Activated B cell treated with CpG ODN at 0.5 μM for 24 hours (primary cell): ENCODE measurements at regions of chr6 and their contacts with region 1.

Region 1: DNA sequence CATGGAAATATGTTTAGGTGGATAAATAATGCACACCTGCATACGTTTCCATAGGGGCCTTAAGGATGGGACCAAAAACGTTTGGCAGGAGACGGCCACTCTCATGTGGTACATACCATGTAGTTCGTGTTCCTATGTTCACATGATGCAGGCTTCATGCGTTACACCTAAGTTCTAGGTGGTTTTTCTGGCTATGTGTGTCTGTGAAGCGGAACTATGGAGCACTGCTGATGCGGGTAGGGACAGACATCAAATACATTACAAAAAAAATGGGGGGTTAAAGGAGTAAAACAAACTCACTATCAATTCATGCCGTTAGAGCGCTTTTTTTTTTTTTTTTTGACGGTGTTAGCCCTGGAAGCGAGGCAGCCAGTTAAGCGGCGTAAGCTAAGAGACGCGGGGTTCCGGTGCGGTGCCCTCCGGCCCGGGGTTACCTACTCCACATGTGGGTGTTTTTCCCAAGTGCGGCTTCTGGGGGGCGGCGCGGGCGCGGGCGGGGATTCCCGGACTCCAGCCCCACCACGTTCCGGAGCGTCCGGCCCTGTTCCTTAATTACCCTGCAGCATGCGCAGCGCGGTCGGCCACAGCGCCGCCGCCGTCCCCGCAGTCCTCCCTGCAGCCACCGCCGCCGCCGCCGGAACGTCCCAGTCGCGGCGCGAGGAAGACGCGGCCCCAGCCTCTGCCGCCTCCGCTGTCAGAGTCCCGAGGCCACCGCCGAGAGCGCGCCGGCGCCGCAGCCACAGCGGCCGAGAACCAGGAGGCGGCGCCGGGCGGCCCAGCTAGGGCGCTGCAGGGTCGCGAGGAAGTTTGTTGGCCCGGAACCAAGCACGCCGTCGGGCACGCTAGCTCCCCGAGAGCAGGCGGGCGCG is 648 bp downstream of the COL19A1 start:
- DNase-seq: peak; percentile 81
- ATAC-seq: peak; percentile 74
- H3K4me3 Mint-ChIP-seq: peak overlapping the region; percentile 88
- H3K27ac Mint-ChIP-seq: peak overlapping the region; percentile 98
- H3K4me1 Mint-ChIP-seq: peaks cover 74% of the 10 kb centered on the region
- H3K27me3 Mint-ChIP-seq: no peaks in the 10 kb centered on the region
- CTCF ChIP-seq: no peak

Region 2: GRCh38 chr6:69732640-69733039 is 134.4 kb before region 1 on chr6:
- CTCF ChIA-PET with region 1: interaction called, 4 read pairs
- POLR2A ChIA-PET with region 1: interaction called, 3 read pairs
- intact Hi-C with region 1: loop called (anchors 2 kb)
- DNase-seq: no peak
- ATAC-seq: peak; percentile 64
- H3K4me3 Mint-ChIP-seq: no peak overlapping the region
- H3K27ac Mint-ChIP-seq: no peak overlapping the region
- H3K4me1 Mint-ChIP-seq: peaks cover 13% of the 10 kb centered on the region
- H3K27me3 Mint-ChIP-seq: no peaks in the 10 kb centered on the region
- CTCF ChIP-seq: no peak

Region 3: DNA sequence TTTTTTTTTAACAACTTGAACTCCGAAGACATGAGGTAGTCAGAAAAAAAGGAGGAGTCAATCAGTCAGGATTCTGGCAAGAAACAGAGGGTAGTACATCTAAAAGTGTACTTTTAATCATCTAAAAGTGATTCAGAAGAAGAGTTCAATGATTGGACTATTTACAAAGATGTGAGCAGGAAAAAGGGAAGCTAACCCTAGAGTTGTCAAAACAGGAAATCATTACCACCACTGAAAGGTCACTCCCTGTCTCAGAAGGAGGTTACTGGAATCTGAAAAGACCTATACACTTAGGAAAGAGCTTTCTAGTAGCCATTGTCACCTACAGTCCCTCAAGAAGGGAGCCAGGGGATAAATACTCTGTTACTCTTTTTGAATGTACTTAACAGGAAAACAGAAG is 53.5 kb before region 1 on chr6:
- CTCF ChIA-PET with region 1: interaction called, 8 read pairs
- POLR2A ChIA-PET with region 1: interaction called, 41 read pairs
- intact Hi-C with region 1: loop called (anchors 1 kb)
- DNase-seq: no peak
- ATAC-seq: peak; percentile 56
- H3K4me3 Mint-ChIP-seq: peak overlapping the region; percentile 56
- H3K27ac Mint-ChIP-seq: peak overlapping the region; percentile 97
- H3K4me1 Mint-ChIP-seq: peaks cover 79% of the 10 kb centered on the region
- H3K27me3 Mint-ChIP-seq: no peaks in the 10 kb centered on the region
- CTCF ChIP-seq: no peak

Region 4: GRCh38 chr6:69881322-69882151 is 14.5 kb after region 1 on chr6:
- CTCF ChIA-PET with region 1: interaction called, 24 read pairs
- POLR2A ChIA-PET with region 1: interaction called, 141 read pairs
- intact Hi-C with region 1: loop called (anchors 1 kb)
- DNase-seq: no peak
- ATAC-seq: peak; percentile 87
- H3K4me3 Mint-ChIP-seq: peak overlapping the region; percentile 79
- H3K27ac Mint-ChIP-seq: peak overlapping the region; percentile 99
- H3K4me1 Mint-ChIP-seq: peaks cover 77% of the 10 kb centered on the region
- H3K27me3 Mint-ChIP-seq: no peaks in the 10 kb centered on the region
- CTCF ChIP-seq: no peak

Region 5: DNA sequence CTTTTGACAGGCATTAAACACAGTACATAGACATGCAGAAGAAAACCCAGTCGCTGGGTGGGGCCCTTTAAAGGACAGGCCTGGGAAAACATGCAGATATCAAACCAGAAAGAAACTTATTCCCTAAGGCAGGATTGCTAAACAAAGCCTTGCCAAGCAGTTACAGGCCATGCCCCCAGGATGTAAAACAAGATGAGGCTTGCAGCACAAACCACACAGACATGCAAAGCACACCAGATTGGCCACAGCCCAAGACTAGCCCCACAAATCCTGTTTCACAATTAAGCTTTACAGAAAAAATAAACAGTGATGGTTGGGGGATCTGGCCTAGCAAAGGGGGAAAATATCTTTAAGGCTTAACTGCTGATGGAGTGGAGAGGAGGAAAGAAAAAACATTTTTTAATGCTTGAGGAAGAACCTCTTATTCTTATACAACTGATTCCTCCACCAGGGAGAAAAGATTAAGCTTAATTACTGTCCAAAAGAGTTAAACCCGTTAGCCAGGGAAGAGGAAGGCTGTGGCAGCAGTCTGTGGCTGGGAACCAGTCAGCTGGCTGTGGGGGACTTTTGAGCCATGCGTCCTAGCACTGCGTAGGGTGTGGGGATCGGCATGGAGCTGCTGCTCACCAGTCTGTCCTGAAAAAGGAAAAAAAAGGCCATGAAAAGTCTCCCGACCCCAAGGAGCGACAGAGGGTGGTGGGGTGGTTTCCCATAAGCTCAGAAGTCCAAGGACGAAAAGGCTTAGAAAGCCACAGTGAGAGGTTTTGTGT is 27.8 kb after region 1 on chr6:
- CTCF ChIA-PET with region 1: interaction called, 4 read pairs
- POLR2A ChIA-PET with region 1: interaction called, 13 read pairs
- intact Hi-C with region 1: no loop called
- DNase-seq: no peak
- ATAC-seq: peak; percentile 49
- H3K4me3 Mint-ChIP-seq: peak overlapping the region; percentile 32
- H3K27ac Mint-ChIP-seq: peak overlapping the region; percentile 71
- H3K4me1 Mint-ChIP-seq: peaks cover 57% of the 10 kb centered on the region
- H3K27me3 Mint-ChIP-seq: no peaks in the 10 kb centered on the region
- CTCF ChIP-seq: no peak

Region 6: DNA sequence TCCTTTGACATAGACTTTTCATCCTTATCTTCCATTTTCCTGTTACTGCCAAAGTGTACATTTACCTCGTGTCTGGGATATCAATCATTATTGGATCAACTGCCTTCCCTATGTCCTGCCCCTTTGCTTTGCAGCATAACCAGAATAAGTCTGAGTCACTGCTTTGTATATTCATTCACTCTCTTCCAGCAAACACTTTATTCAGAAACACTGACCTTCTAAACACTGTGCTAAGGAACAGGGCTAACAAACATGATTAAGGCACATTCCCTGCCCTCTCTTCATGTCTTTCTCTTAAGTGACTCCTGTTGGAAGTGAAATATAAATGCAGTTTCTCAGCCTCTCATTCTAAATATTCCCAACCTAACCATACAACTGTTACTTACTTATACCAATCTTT is 66.2 kb after region 1 on chr6:
- CTCF ChIA-PET with region 1: interaction called, 4 read pairs
- POLR2A ChIA-PET with region 1: no interaction called
- intact Hi-C with region 1: loop called (anchors 2 kb)
- DNase-seq: no peak
- ATAC-seq: no peak
- H3K4me3 Mint-ChIP-seq: no peak overlapping the region
- H3K27ac Mint-ChIP-seq: peak overlapping the region; percentile 8
- H3K4me1 Mint-ChIP-seq: peaks cover 13% of the 10 kb centered on the region
- H3K27me3 Mint-ChIP-seq: no peaks in the 10 kb centered on the region
- CTCF ChIP-seq: no peak

Region 7: GRCh38 chr6:70107852-70108629 is 241.0 kb after region 1 on chr6:
- CTCF ChIA-PET with region 1: interaction called, 10 read pairs
- POLR2A ChIA-PET with region 1: interaction called, 7 read pairs
- intact Hi-C with region 1: no loop called
- DNase-seq: no peak
- ATAC-seq: no peak
- H3K4me3 Mint-ChIP-seq: no peak overlapping the region
- H3K27ac Mint-ChIP-seq: no peak overlapping the region
- H3K4me1 Mint-ChIP-seq: peaks cover 8% of the 10 kb centered on the region
- H3K27me3 Mint-ChIP-seq: no peaks in the 10 kb centered on the region
- CTCF ChIP-seq: peak; percentile 80